ENCODE measurements at regions of chr2 and their contacts with region 1.

Region 1: DNA sequence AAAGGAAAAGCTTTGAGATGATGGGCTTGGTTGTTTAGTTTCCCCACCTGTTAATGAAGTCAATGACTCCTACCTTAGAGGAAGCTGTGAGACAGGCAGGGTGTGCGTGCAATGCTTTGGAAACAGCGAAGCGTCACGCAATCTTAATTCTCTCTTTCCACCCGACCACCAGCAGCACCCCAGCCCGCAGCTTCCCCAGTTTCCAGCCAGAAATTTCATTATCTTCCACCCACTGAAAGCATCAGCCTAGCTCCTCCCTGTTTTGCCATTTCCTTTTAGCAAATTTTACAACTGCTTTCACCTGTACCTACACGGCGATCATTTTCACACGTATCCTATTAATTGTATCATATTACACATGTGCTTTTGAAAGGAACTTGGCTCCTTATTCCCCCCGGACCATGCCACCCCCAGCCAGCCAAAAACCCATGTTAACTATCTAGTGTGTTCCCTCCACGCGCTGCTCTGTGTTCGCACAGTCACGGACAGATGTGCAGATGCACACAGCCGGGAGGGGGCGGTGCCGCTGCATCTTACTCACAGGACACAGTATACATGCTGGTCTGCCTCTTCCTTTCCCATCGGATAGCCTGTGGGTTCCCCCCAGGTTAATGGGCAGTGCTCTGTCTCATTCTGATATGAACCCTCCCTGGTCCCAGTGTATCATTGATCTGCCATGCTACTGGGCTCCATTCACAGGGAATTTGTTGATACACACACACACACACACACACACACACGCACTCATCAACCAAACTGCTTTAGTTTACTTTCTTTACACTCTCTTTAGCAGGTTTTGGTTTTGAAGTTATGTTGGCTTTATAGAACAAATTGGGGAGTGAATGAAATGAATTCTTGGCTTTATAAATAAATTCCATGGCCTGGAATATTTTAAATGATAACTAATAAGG is 22.4 kb downstream of the CYP27C1 start:
- DNase-seq: peak; percentile 82
- H3K4me3 ChIP-seq: peak overlapping the region; percentile 19
- H3K27ac ChIP-seq: no peak overlapping the region
- H3K4me1 ChIP-seq: no peaks in the 10 kb centered on the region
- H3K27me3 ChIP-seq: no peaks in the 10 kb centered on the region
- CTCF ChIP-seq: peak; percentile 54

Region 2: DNA sequence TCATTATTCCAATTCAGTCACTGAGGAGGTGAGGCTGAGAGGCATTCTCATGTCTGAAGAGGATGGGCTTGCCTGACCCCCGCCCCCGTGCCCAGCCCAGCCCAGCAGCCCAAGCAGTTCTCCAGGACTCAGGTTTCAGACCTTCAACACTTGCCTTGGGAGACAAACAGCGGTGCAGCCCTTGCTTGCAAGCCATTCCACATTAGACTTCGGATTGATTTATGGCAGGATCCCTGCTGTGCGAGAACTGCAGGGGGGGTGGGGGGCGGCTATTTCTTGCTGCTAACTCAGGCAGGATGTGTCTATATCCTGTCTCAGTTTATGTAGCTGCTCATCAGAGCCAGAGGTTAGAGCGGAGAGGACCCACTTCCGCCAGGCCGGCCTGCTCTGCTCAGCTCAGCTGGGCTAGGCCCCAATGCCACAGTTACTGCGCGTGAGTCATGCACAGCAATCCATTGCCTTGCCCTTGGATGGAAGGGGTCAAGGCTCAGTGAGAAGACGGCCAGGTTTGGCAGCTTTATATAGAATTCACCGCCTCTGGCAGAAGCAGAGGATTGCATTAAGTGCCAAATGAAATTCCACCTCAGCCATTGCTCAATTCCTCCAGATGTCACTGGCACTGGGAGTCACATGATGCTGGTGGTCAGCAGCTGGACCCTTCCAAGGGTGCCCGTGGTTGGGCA is 540.0 kb before region 1 on chr2:
- intact Hi-C with region 1: no loop called
- DNase-seq: peak; percentile 57
- H3K4me3 ChIP-seq: peak overlapping the region; percentile 63
- H3K27ac ChIP-seq: peak overlapping the region; percentile 90
- H3K4me1 ChIP-seq: no peaks in the 10 kb centered on the region
- H3K27me3 ChIP-seq: no peaks in the 10 kb centered on the region
- CTCF ChIP-seq: no peak

Region 3: DNA sequence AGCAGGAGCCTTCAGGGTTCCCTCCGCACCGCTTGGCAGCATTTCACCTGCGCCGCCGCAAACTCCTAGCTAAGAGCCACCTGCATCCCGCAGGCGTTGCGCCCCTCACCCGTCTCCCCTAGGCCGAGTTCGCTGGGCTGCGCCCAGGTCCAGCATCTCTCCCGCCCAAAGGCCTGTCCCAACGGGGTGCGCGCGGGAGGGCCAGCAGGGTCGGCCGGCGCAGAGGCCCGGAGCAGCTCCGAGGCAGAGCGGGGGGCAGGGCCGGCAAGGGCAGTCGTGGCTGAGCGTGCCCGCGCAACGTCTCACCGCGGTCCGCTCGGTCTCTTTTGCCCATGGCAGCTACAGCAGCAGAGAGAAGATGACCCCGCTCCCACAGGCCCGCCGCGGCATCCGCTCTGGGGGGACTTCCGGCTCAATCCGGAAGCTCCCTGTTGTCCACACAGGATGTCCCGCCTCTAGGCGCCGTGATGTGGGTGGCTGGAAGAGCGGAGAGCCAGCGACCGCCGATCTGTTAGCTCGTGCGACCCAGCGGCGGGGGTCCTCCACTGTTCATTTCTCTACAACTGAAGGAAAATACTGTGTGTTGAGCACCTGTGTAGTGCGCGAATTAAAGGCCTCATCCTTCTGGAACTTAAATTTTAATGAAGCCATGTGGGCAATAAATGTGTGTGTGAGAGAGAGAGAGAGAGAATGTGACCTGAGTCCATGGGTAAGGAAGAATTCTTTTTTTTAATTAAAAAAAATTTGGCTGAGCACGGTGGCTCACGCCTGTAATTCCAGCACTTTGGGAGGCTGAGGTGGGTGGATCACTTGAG is 96.2 kb after region 1 on chr2 and contains the start of gene ERCC3:
- intact Hi-C with region 1: loop called (anchors 5 kb)
- DNase-seq: peak; percentile 87
- H3K4me3 ChIP-seq: peak within 1 kb of the TSS; percentile 97
- H3K27ac ChIP-seq: peak within 1 kb of the TSS; percentile 35
- H3K4me1 ChIP-seq: peaks cover 7% of the 10 kb centered on the region
- H3K27me3 ChIP-seq: no peaks in the 10 kb centered on the region
- CTCF ChIP-seq: no peak
- total RNA-seq, gene ERCC3: 27.8 to 32.5 TPM

Region 4: GRCh38 chr2:127479866-127480743 is 282.4 kb after region 1 on chr2:
- intact Hi-C with region 1: loop called (anchors 5 kb)
- DNase-seq: no peak
- H3K4me3 ChIP-seq: no peak overlapping the region
- H3K27ac ChIP-seq: no peak overlapping the region
- H3K4me1 ChIP-seq: no peaks in the 10 kb centered on the region
- H3K27me3 ChIP-seq: no peaks in the 10 kb centered on the region
- CTCF ChIP-seq: no peak

Region 5: GRCh38 chr2:127498386-127498785 is 300.7 kb after region 1 on chr2:
- intact Hi-C with region 1: no loop called
- DNase-seq: no peak
- H3K4me3 ChIP-seq: no peak overlapping the region
- H3K27ac ChIP-seq: no peak overlapping the region
- H3K4me1 ChIP-seq: no peaks in the 10 kb centered on the region
- H3K27me3 ChIP-seq: no peaks in the 10 kb centered on the region
- CTCF ChIP-seq: no peak

Region 6: GRCh38 chr2:127649684-127650040 is 451.9 kb after region 1 on chr2:
- intact Hi-C with region 1: loop called (anchors 5 kb)
- DNase-seq: peak; percentile 92
- H3K4me3 ChIP-seq: no peak overlapping the region
- H3K27ac ChIP-seq: no peak overlapping the region
- H3K4me1 ChIP-seq: no peaks in the 10 kb centered on the region
- H3K27me3 ChIP-seq: no peaks in the 10 kb centered on the region
- CTCF ChIP-seq: peak; percentile 86